Activated CD4-positive, alpha-beta memory T cell treated with anti-CD3 and anti-CD28 coated beads for 36 hours (primary cell): ENCODE measurements at regions of chr20 and their contacts with region 1.

Region 1: GRCh38 chr20:52410182-52410647 is 218.6 kb upstream of the ZFP64 start:
- DNase-seq: peak; percentile 65
- H3K4me3 Mint-ChIP-seq: peak overlapping the region; percentile 38
- H3K27ac Mint-ChIP-seq: peak overlapping the region; percentile 63
- H3K4me1 Mint-ChIP-seq: peaks cover 64% of the 10 kb centered on the region
- H3K27me3 Mint-ChIP-seq: no peaks in the 10 kb centered on the region

Region 2: DNA sequence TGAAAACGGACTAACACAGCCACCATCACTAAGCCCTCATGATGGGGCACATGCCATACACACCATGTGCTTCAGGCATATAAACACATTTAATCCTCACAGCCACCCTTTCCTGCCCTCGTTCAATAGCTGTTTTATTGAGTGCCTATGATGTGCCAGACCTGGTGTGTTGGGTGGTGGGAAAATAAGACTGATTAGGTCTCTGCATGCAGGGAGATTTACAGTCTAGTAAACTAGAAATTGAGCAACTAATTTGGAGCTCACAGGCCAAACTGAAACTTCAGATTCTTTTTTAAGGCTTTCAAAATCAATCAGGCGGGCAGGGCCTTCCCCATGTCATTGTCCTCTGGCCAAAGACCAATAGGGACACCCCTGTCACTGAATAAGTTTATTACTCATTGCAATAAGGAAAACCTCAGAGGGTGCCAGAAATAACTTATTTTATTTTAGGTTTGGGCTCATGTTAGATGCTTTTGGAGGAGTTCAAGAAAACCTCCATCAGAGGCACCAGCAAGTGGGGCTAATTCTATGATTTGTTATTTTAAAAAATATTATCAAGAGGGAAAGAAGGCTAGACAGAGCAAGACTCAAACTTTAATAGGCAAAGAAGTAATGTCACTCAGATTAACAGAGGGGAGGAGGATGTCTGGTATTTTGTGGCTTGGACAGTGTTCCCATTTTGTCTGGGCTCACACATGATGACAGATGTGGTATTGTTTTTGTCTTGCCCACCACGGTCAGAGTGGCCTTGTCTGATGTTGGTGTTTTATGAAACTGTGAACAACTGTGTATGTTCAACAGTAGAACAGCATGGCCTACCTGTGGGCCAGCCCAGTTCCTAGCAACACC is 230.7 kb before region 1 on chr20:
- CTCF ChIA-PET with region 1: no interaction called
- POLR2A ChIA-PET with region 1: no interaction called
- intact Hi-C with region 1: no loop called
- DNase-seq: peak; percentile 59
- H3K4me3 Mint-ChIP-seq: no peak overlapping the region
- H3K27ac Mint-ChIP-seq: no peak overlapping the region
- H3K4me1 Mint-ChIP-seq: peaks cover 19% of the 10 kb centered on the region
- H3K27me3 Mint-ChIP-seq: no peaks in the 10 kb centered on the region

Region 3: DNA sequence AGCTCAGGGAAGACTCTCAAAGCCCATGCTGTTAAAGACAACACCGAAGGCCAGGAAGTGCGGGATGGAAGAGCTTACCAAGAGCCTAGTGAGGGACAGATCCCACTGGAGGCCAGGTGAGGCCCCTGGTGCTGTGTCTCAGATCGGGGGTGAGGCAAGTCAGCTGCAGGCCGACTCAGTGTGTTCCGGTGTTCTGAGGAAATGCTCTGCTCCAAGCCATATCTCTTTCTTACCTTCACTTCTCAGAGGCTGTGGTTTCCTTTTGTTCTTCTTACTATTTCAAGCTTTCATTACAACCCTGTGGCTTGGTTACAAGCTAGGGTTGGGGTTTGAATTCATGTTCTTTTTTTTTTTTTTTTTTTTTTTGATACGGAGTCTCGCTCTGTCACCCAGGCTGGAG is 104.4 kb before region 1 on chr20:
- CTCF ChIA-PET with region 1: no interaction called
- POLR2A ChIA-PET with region 1: no interaction called
- intact Hi-C with region 1: loop called (anchors 10 kb)
- DNase-seq: peak; percentile 60
- H3K4me3 Mint-ChIP-seq: peak overlapping the region; percentile 13
- H3K27ac Mint-ChIP-seq: peak overlapping the region; percentile 50
- H3K4me1 Mint-ChIP-seq: peaks cover 51% of the 10 kb centered on the region
- H3K27me3 Mint-ChIP-seq: no peaks in the 10 kb centered on the region

Region 4: DNA sequence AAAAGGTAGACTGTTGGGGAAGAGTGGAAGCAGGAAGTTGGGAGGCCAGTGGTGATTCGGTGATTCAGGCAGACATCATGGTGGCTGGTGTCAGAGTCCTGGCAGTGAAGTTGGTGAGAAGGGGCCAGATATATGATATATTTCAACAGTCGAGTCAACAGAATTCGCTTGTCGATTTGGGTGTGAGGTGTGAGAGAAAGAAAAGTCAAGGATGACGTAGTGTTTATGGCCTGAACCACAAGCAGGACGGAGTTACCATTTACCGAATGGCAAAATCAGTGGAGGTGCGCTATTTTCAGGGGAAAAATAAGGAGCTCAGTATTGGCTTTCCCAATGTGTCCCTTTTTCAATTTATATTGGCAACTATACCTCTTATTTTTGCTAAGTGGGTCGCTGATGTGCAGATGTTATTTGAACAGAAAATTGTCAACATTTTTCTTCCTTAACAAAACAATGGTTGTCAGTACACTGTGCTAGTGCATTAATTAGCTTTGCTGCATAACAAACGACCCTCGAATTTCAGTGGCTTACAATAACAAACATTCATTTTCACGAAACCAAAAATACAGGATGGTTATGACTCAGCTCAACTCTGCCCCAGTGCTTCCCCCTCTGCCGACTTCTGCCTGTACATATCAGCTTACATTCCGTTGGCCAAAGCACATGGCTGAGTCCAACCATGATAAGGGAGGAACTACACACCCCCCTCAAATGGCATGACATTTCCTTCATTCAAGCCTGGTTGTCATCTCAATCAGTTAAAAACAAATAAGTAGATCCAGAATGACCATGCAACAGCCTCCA is 36.4 kb after region 1 on chr20:
- CTCF ChIA-PET with region 1: no interaction called
- POLR2A ChIA-PET with region 1: no interaction called
- intact Hi-C with region 1: no loop called
- DNase-seq: no peak
- H3K4me3 Mint-ChIP-seq: no peak overlapping the region
- H3K27ac Mint-ChIP-seq: no peak overlapping the region
- H3K4me1 Mint-ChIP-seq: no peaks in the 10 kb centered on the region
- H3K27me3 Mint-ChIP-seq: no peaks in the 10 kb centered on the region

Region 5: GRCh38 chr20:52494244-52494643 is 84.0 kb after region 1 on chr20:
- CTCF ChIA-PET with region 1: interaction called, 5 read pairs
- POLR2A ChIA-PET with region 1: no interaction called
- intact Hi-C with region 1: loop called (anchors 5 kb)
- DNase-seq: peak; percentile 73
- H3K4me3 Mint-ChIP-seq: no peak overlapping the region
- H3K27ac Mint-ChIP-seq: no peak overlapping the region
- H3K4me1 Mint-ChIP-seq: peaks cover 17% of the 10 kb centered on the region
- H3K27me3 Mint-ChIP-seq: no peaks in the 10 kb centered on the region

Region 6: DNA sequence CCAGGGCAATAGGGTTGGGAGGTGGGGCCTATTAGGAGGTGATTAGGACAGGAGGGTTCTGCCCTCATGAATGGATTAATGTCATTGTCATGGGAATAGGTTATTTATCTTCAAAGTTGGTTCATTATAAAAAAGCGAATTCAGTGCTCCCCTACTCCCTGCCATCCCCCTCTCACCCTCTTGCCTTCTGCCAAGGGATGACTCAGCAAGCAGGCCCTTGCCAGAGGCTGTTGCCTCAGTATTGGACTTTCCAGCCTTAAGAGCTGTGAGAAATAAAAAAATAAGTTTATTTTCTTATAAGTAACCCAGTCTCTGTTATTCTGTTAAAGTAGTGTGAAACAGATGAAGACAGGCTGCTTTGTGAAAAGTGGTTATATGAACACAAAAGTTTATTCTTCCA is 162.5 kb after region 1 on chr20:
- CTCF ChIA-PET with region 1: no interaction called
- POLR2A ChIA-PET with region 1: no interaction called
- intact Hi-C with region 1: no loop called
- DNase-seq: no peak
- H3K4me3 Mint-ChIP-seq: no peak overlapping the region
- H3K27ac Mint-ChIP-seq: no peak overlapping the region
- H3K4me1 Mint-ChIP-seq: no peaks in the 10 kb centered on the region
- H3K27me3 Mint-ChIP-seq: no peaks in the 10 kb centered on the region

Region 7: GRCh38 chr20:53077373-53078205 is 667.4 kb after region 1 on chr20:
- CTCF ChIA-PET with region 1: no interaction called
- POLR2A ChIA-PET with region 1: no interaction called
- intact Hi-C with region 1: loop called (anchors 5 kb)
- DNase-seq: peak; percentile 51
- H3K4me3 Mint-ChIP-seq: no peak overlapping the region
- H3K27ac Mint-ChIP-seq: no peak overlapping the region
- H3K4me1 Mint-ChIP-seq: peaks cover 47% of the 10 kb centered on the region
- H3K27me3 Mint-ChIP-seq: no peaks in the 10 kb centered on the region

Region 8: GRCh38 chr20:53226826-53227225 is 816.6 kb after region 1 on chr20:
- CTCF ChIA-PET with region 1: no interaction called
- POLR2A ChIA-PET with region 1: no interaction called
- intact Hi-C with region 1: loop called (anchors 10 kb)
- DNase-seq: no peak
- H3K4me3 Mint-ChIP-seq: no peak overlapping the region
- H3K27ac Mint-ChIP-seq: no peak overlapping the region
- H3K4me1 Mint-ChIP-seq: peaks cover 16% of the 10 kb centered on the region
- H3K27me3 Mint-ChIP-seq: no peaks in the 10 kb centered on the region